Activated T-helper 2 cell treated with anti-CD3 and anti-CD28 coated beads, Interferon-gamma antibody, Interleukin-2, Interleukin-4, amounts not matched to agents 10 μg/mL and 5 μg/mL and 100 μg/mL, durations not matched to agents 14 hours and 24 hours and 36 hours (primary cell): ENCODE measurements at regions of chr2 and their contacts with region 1.

Region 1: GRCh38 chr2:36663851-36664695 is 32.4 kb upstream of the VIT start:
- DNase-seq: no peak
- H3K4me3 Mint-ChIP-seq: no peak overlapping the region
- H3K27ac Mint-ChIP-seq: no peak overlapping the region
- H3K4me1 Mint-ChIP-seq: no peaks in the 10 kb centered on the region
- H3K27me3 Mint-ChIP-seq: peaks cover 5% of the 10 kb centered on the region

Region 2: DNA sequence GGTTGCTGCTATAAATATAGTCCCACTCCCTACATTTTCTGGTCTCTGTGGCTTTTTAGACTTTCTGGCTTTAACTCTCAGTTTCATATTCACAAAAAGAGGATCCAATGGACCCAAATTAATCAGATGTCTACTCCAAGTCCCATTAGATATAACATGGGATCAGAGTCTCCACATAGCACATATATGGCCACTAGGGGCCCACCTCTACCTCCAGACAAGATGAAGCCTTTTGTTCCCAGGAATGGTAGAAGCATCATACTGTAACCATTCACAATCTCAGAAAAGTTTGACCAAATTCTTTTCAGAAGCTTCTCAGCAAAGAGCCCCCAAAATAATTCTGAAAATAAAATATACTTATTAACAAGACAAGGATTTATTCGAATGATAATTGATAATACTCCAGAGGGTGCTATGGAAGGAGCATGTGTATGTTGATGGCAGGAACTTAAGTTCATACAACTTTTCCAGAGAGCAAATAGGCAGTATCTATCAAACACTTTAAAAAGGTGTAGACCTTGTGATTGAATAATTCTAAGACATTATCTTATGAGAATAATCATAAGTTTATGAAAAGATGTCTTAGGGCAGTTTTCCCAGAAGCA is 690.8 kb before region 1 on chr2:
- intact Hi-C with region 1: loop called (anchors 5 kb)
- DNase-seq: no peak
- H3K4me3 Mint-ChIP-seq: no peak overlapping the region
- H3K27ac Mint-ChIP-seq: no peak overlapping the region
- H3K4me1 Mint-ChIP-seq: peaks cover 3% of the 10 kb centered on the region
- H3K27me3 Mint-ChIP-seq: peaks cover 12% of the 10 kb centered on the region

Region 3: DNA sequence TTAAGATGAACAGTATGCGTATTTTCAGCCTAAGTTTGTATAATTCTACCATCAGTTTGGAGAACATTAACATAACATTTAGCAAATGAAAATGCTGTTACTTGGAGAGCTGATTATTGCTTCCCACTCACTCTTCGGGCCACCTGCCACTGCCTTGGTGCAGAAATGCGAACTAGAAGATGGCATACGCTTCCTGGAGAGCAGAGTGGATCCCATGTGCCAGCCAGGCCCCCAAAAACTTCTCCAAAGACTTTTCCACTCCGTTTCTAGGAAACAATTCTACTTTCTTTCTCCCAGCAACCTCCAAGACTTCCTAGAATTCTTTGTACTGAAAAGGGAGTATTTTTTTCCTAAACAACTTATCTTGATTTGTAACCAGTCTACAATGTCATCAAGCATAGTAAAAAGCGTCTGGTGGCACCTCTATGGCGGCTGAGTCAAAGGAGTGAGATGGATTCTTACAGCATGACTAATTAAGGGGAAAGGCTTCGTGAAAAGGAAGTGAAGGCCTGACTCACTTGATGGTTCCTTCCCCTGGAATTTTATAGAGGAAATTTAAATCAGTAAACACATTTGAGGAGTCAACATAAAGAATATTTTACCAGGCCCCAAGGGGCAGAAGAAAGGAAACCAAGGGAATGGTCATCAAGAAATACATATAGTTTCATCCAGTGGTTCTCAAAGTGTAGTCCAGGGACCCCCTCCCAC is 102.7 kb before region 1 on chr2:
- intact Hi-C with region 1: no loop called
- DNase-seq: no peak
- H3K4me3 Mint-ChIP-seq: no peak overlapping the region
- H3K27ac Mint-ChIP-seq: no peak overlapping the region
- H3K4me1 Mint-ChIP-seq: peaks cover 12% of the 10 kb centered on the region
- H3K27me3 Mint-ChIP-seq: no peaks in the 10 kb centered on the region

Region 4: DNA sequence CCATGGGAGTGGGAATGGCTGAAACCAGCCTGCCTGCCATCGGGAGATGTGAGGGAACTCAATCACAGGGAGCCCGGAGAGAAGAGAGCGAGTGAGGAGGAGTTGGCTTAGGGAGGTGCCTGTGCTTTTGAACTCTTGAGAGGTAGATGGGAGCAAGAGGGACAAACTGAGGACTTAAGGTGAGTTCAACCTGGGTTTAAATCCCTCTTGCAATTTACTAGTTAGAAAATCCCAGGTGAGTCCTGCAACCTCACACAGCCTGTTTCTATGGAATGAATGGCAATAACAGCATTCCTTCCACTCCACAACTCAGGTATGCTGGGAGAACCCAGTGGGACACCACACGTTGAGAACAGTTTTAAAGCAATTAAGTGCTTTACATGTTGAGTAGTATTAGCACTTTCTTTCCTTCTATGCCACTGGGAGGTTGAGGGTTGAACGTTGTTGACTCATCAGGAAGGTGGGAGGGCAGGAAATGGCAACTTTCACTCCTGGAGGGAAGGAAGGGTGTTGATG is 89.7 kb after region 1 on chr2:
- intact Hi-C with region 1: no loop called
- DNase-seq: no peak
- H3K4me3 Mint-ChIP-seq: no peak overlapping the region
- H3K27ac Mint-ChIP-seq: no peak overlapping the region
- H3K4me1 Mint-ChIP-seq: no peaks in the 10 kb centered on the region
- H3K27me3 Mint-ChIP-seq: peaks cover 9% of the 10 kb centered on the region